ENCODE measurements at regions of chr1 and their contacts with region 1.

Region 1: DNA sequence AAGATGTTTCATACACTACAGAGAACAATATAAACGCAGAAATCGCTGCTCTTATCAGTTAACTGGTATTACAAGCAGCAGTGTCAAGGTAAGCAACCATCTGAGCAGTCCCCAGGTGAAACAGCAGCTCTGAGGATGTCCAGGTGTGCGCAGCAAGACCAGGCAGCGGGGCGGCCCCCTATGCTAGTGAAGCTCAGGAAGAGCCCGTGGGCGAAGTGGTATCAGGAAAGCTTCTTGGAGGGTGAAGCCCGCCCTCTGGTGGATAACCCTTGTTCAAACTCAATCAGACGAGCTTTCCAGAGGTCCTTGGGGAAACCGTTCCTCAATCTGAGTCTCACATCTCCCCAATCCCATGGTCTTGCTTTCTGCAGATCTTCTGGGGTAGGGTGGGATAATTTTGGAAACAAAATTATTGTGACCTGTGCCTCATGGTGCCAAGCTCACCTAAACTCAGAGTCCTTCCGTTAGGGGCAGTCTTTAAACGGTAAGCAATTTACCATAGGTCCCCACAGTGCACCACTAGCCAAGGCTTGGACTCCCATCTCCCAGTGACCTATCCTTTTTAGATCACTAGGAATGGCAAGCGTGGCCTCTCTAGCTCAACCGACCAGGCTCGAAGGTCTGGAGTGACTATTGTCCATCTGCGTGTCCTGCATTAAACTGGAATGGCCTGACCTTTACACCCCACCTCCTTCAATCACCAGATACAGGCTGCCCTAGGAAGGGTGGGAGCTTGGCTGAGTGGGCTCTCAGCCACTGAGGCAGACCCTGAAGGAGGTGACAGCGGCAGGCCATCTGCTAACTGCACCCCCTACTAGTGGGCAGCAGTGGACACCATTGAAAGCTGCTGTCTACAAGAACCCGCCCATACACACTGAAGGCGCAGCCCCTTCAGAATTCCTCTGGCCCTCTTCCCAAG is 13.6 kb upstream of the FAM110D start:
- DNase-seq: peak; percentile 55 to 89
- ATAC-seq: peak; percentile 73 to 87 (median 76)
- H3K4me3 ChIP-seq: no peak overlapping the region
- H3K4me3 Mint-ChIP-seq: no peak overlapping the region
- H3K27ac ChIP-seq: no peak overlapping the region
- H3K27ac Mint-ChIP-seq: no peak overlapping the region
- H3K4me1 ChIP-seq: peaks cover 4% of the 10 kb centered on the region
- H3K4me1 Mint-ChIP-seq: peaks cover 0 to 5% of the 10 kb centered on the region in 2 donors
- H3K27me3 ChIP-seq: no peaks in the 10 kb centered on the region
- H3K27me3 Mint-ChIP-seq: peaks cover 21 to 28% of the 10 kb centered on the region in 2 donors
- CTCF ChIP-seq: peak; percentile 79

Region 2: GRCh38 chr1:25486602-25487001 is 658.7 kb before region 1 on chr1:
- intact Hi-C with region 1: no loop called
- DNase-seq: no peak
- ATAC-seq: no peak
- H3K4me3 ChIP-seq: no peak overlapping the region
- H3K4me3 Mint-ChIP-seq: no peak overlapping the region
- H3K27ac ChIP-seq: no peak overlapping the region
- H3K27ac Mint-ChIP-seq: peak overlapping the region in 1 of 2 donors; percentile 22
- H3K4me1 ChIP-seq: no peaks in the 10 kb centered on the region
- H3K4me1 Mint-ChIP-seq: peaks cover 0 to 12% of the 10 kb centered on the region in 2 donors
- H3K27me3 ChIP-seq: no peaks in the 10 kb centered on the region
- H3K27me3 Mint-ChIP-seq: no peaks in the 10 kb centered on the region
- CTCF ChIP-seq: no peak

Region 3: DNA sequence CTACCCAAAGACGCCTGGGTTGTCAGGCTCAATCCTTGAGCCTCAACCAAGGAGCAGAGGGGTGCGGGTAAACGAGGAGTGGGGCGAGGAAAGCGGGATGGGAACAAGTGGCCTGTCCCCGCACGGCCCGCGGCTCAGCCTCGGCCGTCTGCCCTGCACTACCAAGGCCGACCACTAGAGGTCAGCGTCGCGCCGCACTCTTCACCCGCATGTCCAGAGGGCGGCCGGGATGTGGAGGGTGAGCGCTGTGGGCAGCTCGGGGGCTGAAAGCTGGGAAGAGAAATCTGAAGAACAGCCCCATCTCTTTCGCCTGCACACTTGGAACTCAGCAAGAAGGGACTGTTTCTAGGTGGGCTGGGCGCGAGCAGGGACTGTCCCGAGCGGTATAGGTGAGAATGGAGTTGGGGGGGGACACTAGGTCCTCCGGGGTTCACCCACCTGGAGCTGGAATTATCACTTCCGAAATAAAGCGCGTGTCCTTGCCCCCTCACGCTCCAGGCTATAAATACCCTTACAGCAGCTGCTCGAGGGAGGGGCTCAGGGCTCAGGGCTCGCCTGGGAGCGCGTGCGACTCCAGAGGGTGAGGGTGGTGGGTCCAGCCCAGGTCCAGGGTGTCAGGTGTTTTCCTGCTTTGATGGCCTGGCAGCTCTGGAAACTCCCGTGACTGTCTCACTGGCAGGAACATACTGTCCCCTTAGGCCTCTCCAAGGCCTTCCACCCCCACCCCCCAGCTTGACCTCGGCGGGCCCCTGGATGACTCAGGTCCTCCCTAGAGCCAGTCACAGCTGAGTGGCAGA is 109.1 kb before region 1 on chr1:
- intact Hi-C with region 1: loop called (anchors 5 kb)
- DNase-seq: peak; percentile 81 to 87
- ATAC-seq: peak; percentile 74 to 91 (median 76)
- H3K4me3 ChIP-seq: peak overlapping the region; percentile 97
- H3K4me3 Mint-ChIP-seq: peak overlapping the region; percentile 97
- H3K27ac ChIP-seq: no peak overlapping the region
- H3K27ac Mint-ChIP-seq: peak overlapping the region; percentile 72 to 89
- H3K4me1 ChIP-seq: peaks cover 19% of the 10 kb centered on the region
- H3K4me1 Mint-ChIP-seq: peaks cover 9 to 20% of the 10 kb centered on the region in 2 donors
- H3K27me3 ChIP-seq: peaks cover 8% of the 10 kb centered on the region
- H3K27me3 Mint-ChIP-seq: peaks cover 0 to 8% of the 10 kb centered on the region in 2 donors
- CTCF ChIP-seq: peak; percentile 99

Region 4: DNA sequence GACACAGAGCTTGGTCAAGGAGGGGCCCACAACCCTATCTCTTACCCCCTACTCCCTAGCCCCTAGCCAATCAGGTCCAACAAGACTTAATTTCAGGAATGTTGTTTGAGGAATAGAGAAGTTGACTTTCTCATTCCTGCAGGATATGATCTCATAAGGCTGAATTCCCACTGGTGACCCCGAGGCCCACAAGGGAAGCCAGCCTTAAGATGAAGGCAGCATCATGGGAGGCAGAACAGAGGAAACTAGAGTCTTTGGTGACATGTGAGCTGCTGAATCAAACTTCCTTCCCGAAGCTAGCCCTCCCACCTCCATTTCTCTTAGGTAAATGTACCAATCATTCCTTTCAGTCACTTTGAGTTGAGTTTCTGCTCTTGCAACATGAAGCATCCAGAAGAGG is 42.8 kb before region 1 on chr1:
- intact Hi-C with region 1: loop called (anchors 1 kb)
- DNase-seq: no peak
- ATAC-seq: no peak
- H3K4me3 ChIP-seq: no peak overlapping the region
- H3K4me3 Mint-ChIP-seq: no peak overlapping the region
- H3K27ac ChIP-seq: no peak overlapping the region
- H3K27ac Mint-ChIP-seq: no peak overlapping the region
- H3K4me1 ChIP-seq: no peaks in the 10 kb centered on the region
- H3K4me1 Mint-ChIP-seq: no peaks in the 10 kb centered on the region
- H3K27me3 ChIP-seq: no peaks in the 10 kb centered on the region
- H3K27me3 Mint-ChIP-seq: peaks cover 3 to 6% of the 10 kb centered on the region in 2 donors
- CTCF ChIP-seq: no peak

Region 5: GRCh38 chr1:26833432-26834405 is 688.4 kb after region 1 on chr1:
- intact Hi-C with region 1: no loop called
- DNase-seq: peak; percentile 83 to 98
- ATAC-seq: peak; percentile 93 to 98 (median 96)
- H3K4me3 ChIP-seq: peak overlapping the region; percentile 17
- H3K4me3 Mint-ChIP-seq: peak overlapping the region; percentile 87
- H3K27ac ChIP-seq: peak overlapping the region; percentile 98
- H3K27ac Mint-ChIP-seq: peak overlapping the region; percentile 99 to 100
- H3K4me1 ChIP-seq: peaks cover 70% of the 10 kb centered on the region
- H3K4me1 Mint-ChIP-seq: peaks cover 64 to 68% of the 10 kb centered on the region in 2 donors
- H3K27me3 ChIP-seq: no peaks in the 10 kb centered on the region
- H3K27me3 Mint-ChIP-seq: no peaks in the 10 kb centered on the region
- CTCF ChIP-seq: peak; percentile 25

Measured in natural killer cell (primary cell).